ENCODE measurements at regions of chr14 and their contacts with region 1.

Region 1: GRCh38 chr14:77314043-77314442 is 6.6 kb downstream of the POMT2 start:
- DNase-seq: no peak
- CTCF ChIP-seq: no peak

Region 2: DNA sequence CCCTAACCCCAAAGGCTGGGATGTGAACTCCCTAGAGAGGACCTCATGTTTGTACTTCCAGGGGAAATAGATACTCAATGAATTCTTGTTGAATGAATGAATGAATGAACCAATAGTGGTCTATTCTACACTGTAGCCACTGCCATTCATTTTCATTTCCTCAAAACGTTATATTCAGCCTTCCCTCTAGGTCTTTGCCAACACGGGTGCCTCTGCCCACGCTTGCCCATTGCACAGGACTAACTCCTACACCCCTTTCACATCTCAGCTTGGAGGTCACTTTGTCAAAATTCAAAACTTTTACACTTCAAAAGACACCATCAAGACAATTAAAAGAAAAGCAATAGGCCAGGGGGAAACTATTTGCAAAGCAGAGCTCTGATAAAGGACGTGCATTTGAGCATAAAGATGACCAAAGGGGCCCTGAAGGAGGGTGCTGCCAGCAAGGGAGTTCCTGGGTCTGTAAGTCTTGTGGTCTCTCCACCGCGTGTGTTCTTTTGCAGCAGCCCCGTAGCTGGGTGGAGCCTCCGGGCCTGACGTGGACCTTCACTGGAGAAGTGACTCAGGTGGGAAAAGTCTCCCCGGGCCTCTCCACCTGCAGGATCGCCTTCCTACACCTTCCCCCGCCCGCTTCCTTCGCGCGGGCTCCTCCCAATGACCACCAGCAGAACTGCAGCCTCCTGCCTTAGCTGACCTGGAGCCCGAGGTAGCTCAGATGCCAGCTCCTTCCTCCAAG is 100.9 kb before region 1 on chr14:
- CTCF ChIA-PET with region 1: interaction called, 10 read pairs
- POLR2A ChIA-PET with region 1: no interaction called
- DNase-seq: peak; percentile 75
- CTCF ChIP-seq: peak; percentile 87

Region 3: GRCh38 chr14:77290741-77291140 is 23.3 kb before region 1 on chr14:
- CTCF ChIA-PET with region 1: interaction called, 247 read pairs
- POLR2A ChIA-PET with region 1: no interaction called
- DNase-seq: no peak
- CTCF ChIP-seq: no peak

Region 4: DNA sequence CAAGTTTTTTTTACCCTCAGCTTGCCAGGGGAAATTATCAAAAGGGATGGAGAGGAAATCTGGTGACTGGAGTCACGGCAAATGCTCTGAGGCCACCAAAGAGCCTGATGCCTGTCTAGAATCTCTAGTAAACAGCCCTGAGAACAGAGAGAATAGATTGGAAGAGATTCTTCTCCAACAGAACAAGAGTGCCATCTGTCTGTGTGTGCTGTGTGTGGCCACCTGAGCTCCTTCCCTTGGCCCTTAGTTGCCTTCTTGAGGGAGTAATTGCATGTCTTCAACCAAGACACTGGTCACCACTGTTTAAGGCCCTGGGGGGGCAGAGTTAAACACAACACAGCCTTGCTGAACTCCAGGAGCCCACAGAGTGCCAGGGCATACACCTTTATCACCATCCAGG is 12.1 kb after region 1 on chr14:
- CTCF ChIA-PET with region 1: interaction called, 32 read pairs
- POLR2A ChIA-PET with region 1: no interaction called
- DNase-seq: no peak
- CTCF ChIP-seq: no peak

Region 5: GRCh38 chr14:77457522-77458290 is 143.7 kb after region 1 on chr14 and contains the starts of genes AHSA1 and VIPAS39:
- CTCF ChIA-PET with region 1: interaction called, 6 read pairs
- POLR2A ChIA-PET with region 1: interaction called, 12 read pairs
- DNase-seq: peak; percentile 92
- CTCF ChIP-seq: no peak